Heart right ventricle (tissue), 16 donors: ENCODE measurements at regions of chr22 and their contacts with region 1.

Region 1: GRCh38 chr22:30253205-30253852 is 6.8 kb upstream of the LIF start:
- DNase-seq: peak; percentile 78 to 80
- ATAC-seq: peak; percentile 21 to 61 (median 44)
- H3K4me3 ChIP-seq: no peak overlapping the region
- H3K27ac ChIP-seq: peak overlapping the region in 4 of 10 donors; percentile 43 to 88 (median 55)
- H3K4me1 ChIP-seq: peaks cover 5 to 64% (median 21%) of the 10 kb centered on the region in 9 donors
- H3K27me3 ChIP-seq: peaks cover 0 to 46% (median 33%) of the 10 kb centered on the region in 7 donors
- CTCF ChIP-seq: no peak

Region 2: DNA sequence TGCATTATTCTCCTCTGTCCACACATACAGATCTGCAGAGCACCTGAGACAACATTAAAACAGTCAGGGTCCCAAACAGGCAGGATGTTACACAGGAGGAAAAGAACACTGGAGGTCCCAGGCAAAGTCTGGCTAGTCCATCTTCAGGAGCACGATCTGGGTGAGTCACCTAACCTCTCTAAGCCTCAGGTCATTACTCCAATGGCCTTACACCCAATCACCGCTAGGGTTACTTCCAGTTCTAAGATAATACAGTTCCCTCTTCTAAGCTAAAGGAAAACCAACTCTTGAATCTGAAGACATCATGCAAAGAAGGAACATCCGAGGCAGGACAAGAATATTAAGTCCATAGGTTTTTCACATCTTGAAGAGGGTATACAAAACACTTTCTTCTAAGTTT is 439.8 kb before region 1 on chr22:
- intact Hi-C with region 1: no loop called
- DNase-seq: no peak
- ATAC-seq: no peak
- H3K4me3 ChIP-seq: no peak overlapping the region
- H3K27ac ChIP-seq: no peak overlapping the region
- H3K4me1 ChIP-seq: peaks cover 8 to 36% (median 23%) of the 10 kb centered on the region in 9 donors
- H3K27me3 ChIP-seq: no peaks in the 10 kb centered on the region
- CTCF ChIP-seq: no peak

Region 3: GRCh38 chr22:30104501-30105156 is 148.7 kb before region 1 on chr22:
- intact Hi-C with region 1: loop called in 6 of 10 experiments (anchors 1 to 2 kb)
- DNase-seq: no peak
- ATAC-seq: no peak
- H3K4me3 ChIP-seq: no peak overlapping the region
- H3K27ac ChIP-seq: no peak overlapping the region
- H3K4me1 ChIP-seq: peaks cover 0 to 5% (median 0%) of the 10 kb centered on the region in 9 donors
- H3K27me3 ChIP-seq: peaks cover 0 to 31% (median 18%) of the 10 kb centered on the region in 7 donors
- CTCF ChIP-seq: no peak

Region 4: GRCh38 chr22:30205281-30206115 is 47.8 kb before region 1 on chr22:
- intact Hi-C with region 1: loop called in 4 of 10 experiments (anchors 5 kb)
- DNase-seq: peak; percentile 52 to 60
- ATAC-seq: peak; percentile 30 to 75 (median 58)
- H3K4me3 ChIP-seq: no peak overlapping the region
- H3K27ac ChIP-seq: peak overlapping the region in 9 of 10 donors; percentile 44 to 92 (median 72)
- H3K4me1 ChIP-seq: peaks cover 2 to 55% (median 37%) of the 10 kb centered on the region in 9 donors
- H3K27me3 ChIP-seq: peaks cover 0 to 83% (median 68%) of the 10 kb centered on the region in 7 donors
- CTCF ChIP-seq: no peak

Region 5: GRCh38 chr22:30336752-30337460 is 83.6 kb after region 1 on chr22:
- intact Hi-C with region 1: no loop called
- DNase-seq: peak; percentile 69 to 71
- ATAC-seq: peak; percentile 50 to 87 (median 80)
- H3K4me3 ChIP-seq: no peak overlapping the region
- H3K27ac ChIP-seq: peak overlapping the region in 5 of 10 donors; percentile 2 to 41 (median 21)
- H3K4me1 ChIP-seq: peaks cover under 1 to 53% (median 28%) of the 10 kb centered on the region in 9 donors
- H3K27me3 ChIP-seq: no peaks in the 10 kb centered on the region
- CTCF ChIP-seq: no peak